MCF 10A (cell line): ENCODE measurements at regions of chr5 and their contacts with region 1.

Region 1: DNA sequence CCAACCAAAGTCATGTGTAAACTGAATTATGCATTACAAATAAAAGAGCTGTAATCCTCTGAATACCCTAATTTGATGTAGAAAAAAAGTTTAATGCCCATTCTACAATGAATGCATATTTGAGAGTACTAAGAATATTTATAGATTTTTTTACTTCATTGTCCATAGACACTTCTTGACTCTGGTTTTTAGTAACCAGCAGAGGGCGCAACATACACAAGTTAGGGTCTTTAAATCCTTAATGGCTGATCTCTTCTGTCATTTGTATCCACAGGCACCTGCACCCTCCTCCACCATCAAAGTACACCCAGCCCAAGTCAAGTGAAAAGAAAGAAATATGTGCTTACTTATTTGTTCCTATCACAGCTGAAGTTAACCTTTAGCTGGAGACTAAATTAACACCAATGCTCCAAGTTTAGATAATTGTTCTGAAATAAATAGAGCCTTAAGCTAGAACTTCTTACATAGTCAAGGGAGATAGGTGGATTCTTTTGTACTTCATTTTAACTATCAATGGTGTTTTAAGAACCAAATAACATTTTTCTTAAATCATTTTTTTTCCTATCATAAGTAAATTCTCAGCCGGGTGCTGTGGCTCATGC is 524.2 kb upstream of the DAB2 start:
- DNase-seq: peak; percentile 79
- H3K4me3 Mint-ChIP-seq: no peak overlapping the region
- H3K27ac Mint-ChIP-seq: no peak overlapping the region
- H3K4me1 Mint-ChIP-seq: peaks cover 5% of the 10 kb centered on the region
- H3K27me3 Mint-ChIP-seq: no peaks in the 10 kb centered on the region
- CTCF ChIP-seq: peak; percentile 62

Region 2: DNA sequence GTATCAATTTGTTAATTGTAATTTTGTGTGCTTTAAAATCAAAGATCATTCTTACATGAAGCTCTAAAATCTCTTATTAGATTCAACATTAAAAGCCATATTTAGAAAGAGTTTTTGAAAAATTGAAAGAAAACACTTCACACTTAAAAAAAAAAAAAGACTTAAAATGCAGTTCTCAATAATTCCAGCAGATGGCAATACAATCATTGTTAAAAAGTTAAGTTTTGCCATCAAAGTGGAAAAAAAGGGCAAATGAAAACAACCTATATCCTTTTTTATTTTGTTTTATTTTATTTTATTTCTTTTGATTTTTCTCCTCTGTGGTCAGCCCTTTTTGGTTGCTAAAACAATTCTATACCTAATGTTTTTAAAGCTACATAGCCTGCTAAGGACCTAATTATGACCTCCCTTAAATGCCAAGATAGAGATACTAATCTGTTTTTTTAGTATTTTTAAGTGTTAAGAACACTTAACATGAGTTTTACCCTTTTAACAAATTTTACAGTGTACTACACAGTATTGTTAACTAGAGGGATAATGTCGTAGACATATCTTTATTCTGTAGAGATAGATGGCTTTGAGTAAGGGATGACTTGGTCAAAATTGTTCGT is 370.0 kb before region 1 on chr5:
- CTCF ChIA-PET with region 1: no interaction called
- POLR2A ChIA-PET with region 1: no interaction called
- intact Hi-C with region 1: loop called (anchors 5 kb)
- DNase-seq: peak; percentile 13
- H3K4me3 Mint-ChIP-seq: no peak overlapping the region
- H3K27ac Mint-ChIP-seq: no peak overlapping the region
- H3K4me1 Mint-ChIP-seq: peaks cover 5% of the 10 kb centered on the region
- H3K27me3 Mint-ChIP-seq: no peaks in the 10 kb centered on the region
- CTCF ChIP-seq: peak; percentile 54

Region 3: GRCh38 chr5:40507095-40507494 is 558.1 kb after region 1 on chr5:
- CTCF ChIA-PET with region 1: no interaction called
- POLR2A ChIA-PET with region 1: no interaction called
- intact Hi-C with region 1: loop called (anchors 2 kb)
- DNase-seq: no peak
- H3K4me3 Mint-ChIP-seq: no peak overlapping the region
- H3K27ac Mint-ChIP-seq: no peak overlapping the region
- H3K4me1 Mint-ChIP-seq: no peaks in the 10 kb centered on the region
- H3K27me3 Mint-ChIP-seq: no peaks in the 10 kb centered on the region
- CTCF ChIP-seq: no peak

Region 4: DNA sequence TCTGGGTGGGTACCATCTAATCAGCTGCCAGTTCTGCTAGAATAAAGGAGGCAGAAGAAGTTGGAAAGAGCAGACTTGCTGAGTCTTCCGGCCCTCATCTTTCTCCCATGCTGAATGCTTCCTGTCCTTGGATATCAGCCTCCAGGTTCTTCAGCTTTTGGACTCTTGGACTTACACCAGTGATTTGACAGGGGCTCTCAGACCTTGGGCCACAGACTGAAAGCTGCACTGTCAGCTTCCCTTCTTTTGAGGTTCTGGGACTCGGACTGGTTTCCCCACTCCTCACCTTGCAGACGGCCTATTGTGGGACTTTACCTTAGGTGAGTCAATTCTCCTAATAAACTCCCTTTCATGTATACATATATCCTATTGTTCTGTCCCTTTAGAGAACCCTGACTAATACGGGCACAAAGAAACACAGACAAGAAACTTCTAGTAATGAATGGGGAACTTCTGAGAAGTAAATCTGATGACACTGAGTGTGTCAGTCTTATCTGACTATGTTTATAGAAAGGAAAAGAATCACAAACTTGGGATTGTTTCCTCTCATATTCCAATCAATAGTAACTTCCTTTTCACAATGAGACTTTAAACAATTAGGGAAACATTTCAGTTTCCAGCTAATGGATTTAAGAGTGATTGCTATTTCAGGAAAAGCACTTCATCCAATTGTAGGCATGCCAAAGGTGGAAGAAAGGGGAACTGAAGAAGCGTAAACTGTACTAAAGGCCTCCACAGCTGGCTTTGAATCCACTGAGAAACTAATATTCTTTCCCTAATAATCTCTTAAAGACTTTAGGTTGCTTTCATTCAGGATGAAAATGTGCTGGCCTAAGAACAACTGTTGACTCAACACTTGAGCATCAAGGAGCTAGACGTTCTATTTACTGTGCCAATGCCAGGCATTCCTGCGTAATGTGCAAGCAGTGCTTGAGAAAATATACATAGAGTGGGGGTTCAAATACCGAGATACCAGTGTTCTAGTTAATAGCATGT is 602.8 kb after region 1 on chr5:
- CTCF ChIA-PET with region 1: no interaction called
- POLR2A ChIA-PET with region 1: no interaction called
- intact Hi-C with region 1: loop called (anchors 1 kb)
- DNase-seq: peak; percentile 86
- H3K4me3 Mint-ChIP-seq: peak overlapping the region; percentile 41
- H3K27ac Mint-ChIP-seq: peak overlapping the region; percentile 87
- H3K4me1 Mint-ChIP-seq: peaks cover 27% of the 10 kb centered on the region
- H3K27me3 Mint-ChIP-seq: no peaks in the 10 kb centered on the region
- CTCF ChIP-seq: no peak

Region 5: DNA sequence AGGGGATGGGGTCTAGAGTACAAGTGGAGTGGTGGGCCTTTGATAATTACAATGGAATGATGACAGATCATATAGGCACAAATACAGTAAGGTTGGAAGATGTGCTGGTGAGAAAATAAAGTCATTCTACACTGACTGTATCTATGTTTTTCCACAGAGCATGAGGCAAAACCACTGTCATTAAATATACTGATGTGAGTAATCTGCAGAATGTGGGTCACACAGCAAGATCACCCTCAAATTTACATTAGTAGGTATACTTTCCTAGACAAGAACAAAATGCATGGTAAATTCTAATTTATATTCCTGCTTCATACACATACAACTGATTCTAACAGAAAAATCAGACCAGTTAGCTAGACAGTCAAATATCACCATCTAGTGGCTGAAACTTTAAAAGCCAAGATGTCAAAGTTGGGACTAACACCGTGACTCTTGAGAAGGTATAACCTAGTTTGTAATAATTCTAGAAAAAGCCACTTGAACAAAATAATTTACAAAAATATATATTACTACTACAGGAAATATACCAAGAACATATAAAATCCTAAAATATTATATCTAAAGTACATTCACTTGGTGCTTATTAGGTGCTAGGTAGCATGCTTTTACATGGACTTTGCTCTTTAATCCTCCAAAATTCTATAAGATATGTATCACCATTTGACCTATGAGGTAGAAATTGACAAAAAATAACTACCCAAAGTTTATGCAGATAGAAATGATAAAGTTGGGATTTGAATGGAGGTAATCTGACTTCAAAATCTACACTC is 787.3 kb after region 1 on chr5:
- CTCF ChIA-PET with region 1: interaction called, 6 read pairs
- POLR2A ChIA-PET with region 1: no interaction called
- intact Hi-C with region 1: loop called (anchors 2 kb)
- DNase-seq: peak; percentile 66
- H3K4me3 Mint-ChIP-seq: no peak overlapping the region
- H3K27ac Mint-ChIP-seq: no peak overlapping the region
- H3K4me1 Mint-ChIP-seq: peaks cover 12% of the 10 kb centered on the region
- H3K27me3 Mint-ChIP-seq: no peaks in the 10 kb centered on the region
- CTCF ChIP-seq: peak; percentile 71

Region 6: GRCh38 chr5:40879163-40879942 is 930.4 kb after region 1 on chr5:
- CTCF ChIA-PET with region 1: no interaction called
- POLR2A ChIA-PET with region 1: no interaction called
- intact Hi-C with region 1: loop called (anchors 5 kb)
- DNase-seq: peak; percentile 38
- H3K4me3 Mint-ChIP-seq: no peak overlapping the region
- H3K27ac Mint-ChIP-seq: no peak overlapping the region
- H3K4me1 Mint-ChIP-seq: no peaks in the 10 kb centered on the region
- H3K27me3 Mint-ChIP-seq: no peaks in the 10 kb centered on the region
- CTCF ChIP-seq: peak; percentile 37